ENCODE measurements at regions of chr11 and their contacts with region 1.

Region 1: DNA sequence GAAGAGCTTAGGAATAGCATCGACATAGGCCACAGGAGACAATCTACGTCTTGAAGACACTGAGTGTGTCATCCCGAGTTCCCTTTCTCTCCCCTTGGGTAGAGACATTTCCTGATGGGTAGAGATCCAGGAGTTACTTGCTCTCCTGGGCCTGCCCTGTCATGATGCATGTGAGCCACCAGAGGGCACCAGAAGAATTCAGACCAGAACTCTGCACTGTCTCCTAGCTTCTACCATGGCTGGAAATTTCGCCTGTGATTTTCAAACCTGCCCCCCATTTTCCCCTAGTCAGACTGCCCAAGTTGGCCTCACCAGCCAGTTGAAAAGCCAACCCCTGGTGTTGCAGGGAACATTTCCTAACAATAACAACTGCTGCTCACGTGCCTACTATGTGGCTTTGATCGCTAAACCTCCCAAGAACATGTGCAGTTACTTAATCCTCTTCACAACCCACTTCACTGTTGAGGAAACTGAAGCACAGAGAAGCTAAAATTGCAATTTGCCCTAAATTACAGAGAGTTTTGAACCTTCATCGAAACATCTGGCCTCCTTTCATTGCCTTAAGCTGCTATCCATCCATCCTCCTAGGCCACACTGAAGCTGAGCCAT is 47.2 kb downstream of the C11orf58 start:
- DNase-seq: peak; percentile 72
- H3K4me3 Mint-ChIP-seq: no peak overlapping the region
- H3K27ac Mint-ChIP-seq: no peak overlapping the region
- H3K4me1 Mint-ChIP-seq: peaks cover 21% of the 10 kb centered on the region
- H3K27me3 Mint-ChIP-seq: no peaks in the 10 kb centered on the region
- CTCF ChIP-seq: peak; percentile 92

Region 2: DNA sequence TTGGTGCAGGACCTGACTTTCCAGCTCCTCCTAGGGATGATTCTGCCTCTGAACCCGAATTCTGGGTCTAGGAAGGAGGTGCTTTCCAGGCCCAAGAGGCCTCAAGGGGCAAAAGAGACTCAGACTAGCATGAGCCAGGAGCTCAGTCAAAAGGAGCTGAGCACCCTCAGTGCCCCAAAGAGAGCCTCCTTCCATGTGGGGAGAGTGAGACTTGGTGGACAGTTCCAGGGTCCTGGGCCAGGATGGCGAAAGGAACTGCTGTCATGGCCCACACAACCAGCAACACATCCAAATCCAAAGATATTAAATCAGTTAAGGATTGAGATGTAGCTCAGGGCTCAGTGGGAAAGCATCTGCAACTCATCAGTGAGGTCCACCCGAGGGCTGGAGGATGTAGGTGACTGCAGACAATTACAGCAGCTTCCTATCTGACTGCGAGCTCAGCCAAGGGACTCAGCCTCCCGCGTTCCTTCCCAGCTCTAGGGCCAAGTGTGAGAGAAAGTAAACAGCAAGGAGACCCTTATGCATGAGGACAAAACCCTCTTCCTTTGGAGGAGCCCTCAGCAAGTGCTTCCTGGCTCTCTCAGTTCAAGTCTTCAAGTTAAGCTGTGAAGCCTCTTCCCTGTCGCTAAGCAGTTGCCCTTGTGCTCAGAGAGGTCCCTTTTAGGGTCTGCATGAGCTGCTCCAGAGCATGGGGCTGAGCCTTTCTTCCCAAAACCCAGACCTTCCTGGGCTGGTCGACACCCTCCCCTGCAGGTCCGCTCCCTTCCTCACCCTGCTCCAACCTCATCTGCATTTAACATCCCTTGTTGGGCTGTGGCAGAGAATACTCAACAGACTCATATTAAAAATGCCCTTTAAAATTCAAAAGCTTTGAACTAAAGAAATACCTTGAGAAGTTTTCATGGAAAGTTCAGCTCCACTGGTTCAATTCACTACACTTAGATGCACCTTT is 11.4 kb before region 1 on chr11:
- CTCF ChIA-PET with region 1: interaction called, 57 read pairs
- POLR2A ChIA-PET with region 1: interaction called, 3 read pairs
- intact Hi-C with region 1: no loop called
- DNase-seq: no peak
- H3K4me3 Mint-ChIP-seq: no peak overlapping the region
- H3K27ac Mint-ChIP-seq: no peak overlapping the region
- H3K4me1 Mint-ChIP-seq: no peaks in the 10 kb centered on the region
- H3K27me3 Mint-ChIP-seq: no peaks in the 10 kb centered on the region
- CTCF ChIP-seq: no peak

Region 3: DNA sequence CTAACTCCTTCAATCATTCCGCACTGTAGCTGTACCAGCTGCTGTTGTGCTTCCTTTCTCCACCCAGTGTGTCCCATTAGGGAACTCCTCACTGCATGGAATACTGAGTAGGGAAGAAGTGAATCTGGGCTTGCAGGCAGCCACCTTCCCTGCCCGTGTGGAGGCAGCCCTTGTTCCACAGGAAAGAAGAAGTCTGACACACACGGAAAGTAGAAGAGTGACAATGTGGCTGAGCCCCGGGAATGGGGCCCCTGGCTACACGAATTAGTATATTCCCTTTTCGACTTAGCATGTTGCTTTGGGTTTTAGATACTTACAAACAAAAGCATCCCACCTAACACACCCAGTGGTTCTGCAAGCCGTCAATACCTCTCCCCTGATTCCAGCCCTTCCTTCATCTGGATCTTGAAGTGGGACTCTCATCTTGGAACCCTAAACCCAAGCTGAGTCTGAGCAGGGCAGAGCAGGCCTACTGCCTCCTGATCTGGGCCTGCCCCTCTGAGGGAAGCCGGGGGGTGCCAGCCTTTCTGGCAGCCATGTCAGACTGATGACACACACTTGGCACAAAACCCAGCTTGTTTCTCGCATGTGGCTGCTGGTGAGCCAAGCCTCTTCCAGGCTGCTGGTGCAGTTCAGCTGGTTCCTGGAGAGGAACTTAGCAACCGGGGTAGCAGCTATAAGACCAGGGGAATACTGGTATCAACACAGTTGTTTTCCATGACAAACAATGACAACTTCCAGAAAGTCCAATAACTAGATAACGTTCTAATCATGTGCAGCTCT is 24.5 kb after region 1 on chr11:
- CTCF ChIA-PET with region 1: interaction called, 16 read pairs
- POLR2A ChIA-PET with region 1: interaction called, 4 read pairs
- intact Hi-C with region 1: no loop called
- DNase-seq: peak; percentile 68
- H3K4me3 Mint-ChIP-seq: no peak overlapping the region
- H3K27ac Mint-ChIP-seq: no peak overlapping the region
- H3K4me1 Mint-ChIP-seq: peaks cover 5% of the 10 kb centered on the region
- H3K27me3 Mint-ChIP-seq: no peaks in the 10 kb centered on the region
- CTCF ChIP-seq: no peak

Region 4: DNA sequence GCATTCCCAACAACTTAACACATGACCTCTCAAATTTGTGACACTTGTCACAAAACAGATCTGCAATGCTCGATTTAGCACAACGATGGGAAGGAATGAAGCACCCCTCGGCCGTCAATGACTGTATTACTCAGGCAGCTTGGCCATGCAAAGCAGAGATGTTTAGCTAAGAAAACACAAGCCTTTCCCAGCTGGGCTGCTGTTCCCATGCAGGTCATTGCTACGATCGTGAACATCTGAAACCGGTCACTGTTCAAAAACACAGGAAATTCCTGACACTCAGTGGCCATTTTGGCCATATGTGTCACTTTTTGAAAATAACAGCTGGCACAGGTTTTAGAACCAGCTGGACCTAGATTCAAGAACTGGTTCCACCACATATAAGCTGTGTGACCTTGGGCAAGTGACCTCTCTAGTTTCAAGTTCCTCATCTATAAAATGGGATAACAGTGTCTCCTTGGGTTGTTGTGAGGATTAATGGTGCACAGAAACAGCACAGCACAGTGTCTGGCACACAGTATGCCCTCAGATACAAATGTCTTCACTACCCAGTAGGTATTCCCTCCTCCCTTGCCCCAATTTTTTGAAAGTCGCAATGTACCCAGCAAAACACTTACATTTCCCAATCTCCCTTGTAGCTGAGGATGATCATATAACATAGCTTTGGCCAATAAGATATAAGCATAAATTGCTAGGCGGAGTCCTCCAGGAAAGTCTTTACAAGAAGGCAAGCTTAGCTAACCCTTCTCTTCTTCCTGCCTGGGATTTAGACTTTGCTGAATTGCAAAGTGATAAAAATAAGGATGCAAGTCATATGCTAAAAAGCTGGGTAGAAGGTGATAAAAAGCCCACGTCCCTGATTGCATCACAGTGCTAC is 45.9 kb after region 1 on chr11:
- CTCF ChIA-PET with region 1: interaction called, 10 read pairs
- POLR2A ChIA-PET with region 1: no interaction called
- intact Hi-C with region 1: no loop called
- DNase-seq: peak; percentile 5
- H3K4me3 Mint-ChIP-seq: no peak overlapping the region
- H3K27ac Mint-ChIP-seq: no peak overlapping the region
- H3K4me1 Mint-ChIP-seq: no peaks in the 10 kb centered on the region
- H3K27me3 Mint-ChIP-seq: no peaks in the 10 kb centered on the region
- CTCF ChIP-seq: no peak

Region 5: DNA sequence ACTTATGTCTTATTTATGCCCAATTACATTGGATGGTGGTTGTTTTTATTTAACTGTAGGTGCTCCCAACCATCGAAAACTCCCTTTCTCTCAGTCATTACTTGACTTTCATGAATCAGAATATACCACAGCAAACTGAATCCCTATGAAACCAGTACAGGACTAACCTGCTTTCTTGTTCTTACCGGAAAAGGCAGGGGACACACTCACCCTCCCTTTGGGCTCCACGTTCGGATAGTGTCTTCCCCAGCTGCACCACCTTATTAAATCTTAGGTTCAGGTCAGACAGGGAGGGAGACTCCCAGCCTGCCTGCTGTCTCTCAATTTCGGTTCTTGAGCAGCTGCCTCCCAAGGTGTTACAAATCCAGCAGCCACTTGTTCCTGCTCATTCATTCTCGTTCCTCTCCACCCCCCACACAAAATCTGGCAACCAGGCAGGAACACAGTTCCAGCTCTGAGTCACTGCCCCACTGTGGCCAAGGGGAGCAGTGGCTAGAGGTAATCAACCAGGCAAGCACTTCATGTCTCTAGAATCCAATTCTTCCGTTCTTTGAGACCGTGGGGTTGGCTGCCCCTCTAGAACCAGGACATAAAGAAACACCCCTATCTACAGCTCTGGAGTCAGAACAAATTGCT is 95.6 kb after region 1 on chr11:
- CTCF ChIA-PET with region 1: interaction called, 61 read pairs
- POLR2A ChIA-PET with region 1: interaction called, 4 read pairs
- intact Hi-C with region 1: loop called (anchors 1 kb)
- DNase-seq: peak; percentile 84
- H3K4me3 Mint-ChIP-seq: peak overlapping the region; percentile 35
- H3K27ac Mint-ChIP-seq: no peak overlapping the region
- H3K4me1 Mint-ChIP-seq: peaks cover 19% of the 10 kb centered on the region
- H3K27me3 Mint-ChIP-seq: no peaks in the 10 kb centered on the region
- CTCF ChIP-seq: no peak

Region 6: GRCh38 chr11:16945671-16946469 is 160.2 kb after region 1 on chr11:
- CTCF ChIA-PET with region 1: interaction called, 4 read pairs
- POLR2A ChIA-PET with region 1: no interaction called
- intact Hi-C with region 1: loop called (anchors 1 kb)
- DNase-seq: peak; percentile 76
- H3K4me3 Mint-ChIP-seq: no peak overlapping the region
- H3K27ac Mint-ChIP-seq: no peak overlapping the region
- H3K4me1 Mint-ChIP-seq: no peaks in the 10 kb centered on the region
- H3K27me3 Mint-ChIP-seq: no peaks in the 10 kb centered on the region
- CTCF ChIP-seq: peak; percentile 75